A549 (cell line): ENCODE measurements at regions of chr7 and their contacts with region 1.

Region 1: GRCh38 chr7:80060218-80060806 is 74.3 kb upstream of the GNAI1 start:
- DNase-seq: peak; percentile 17 to 71
- ATAC-seq: 0 out of 6 replicates have a peak, but pooled peaks of 1 of the 2 experiments have one; percentile 34
- H3K4me3 ChIP-seq: no peak overlapping the region
- H3K27ac ChIP-seq: no peak overlapping the region
- H3K4me1 ChIP-seq: no peaks in the 10 kb centered on the region
- CTCF ChIP-seq: peak; percentile 62
- EP300 ChIP-seq: no peak
- POLR2A ChIP-seq: no peak
- RAD21 ChIP-seq: peak; percentile 74 to 80

Region 2: GRCh38 chr7:80288175-80289122 is 228.1 kb after region 1 on chr7:
- CTCF ChIA-PET with region 1: interaction called, 10 read pairs
- POLR2A ChIA-PET with region 1: no interaction called
- DNase-seq: peak in 1 of 2 experiments; percentile 44
- ATAC-seq: peak; percentile 90 to 97
- H3K4me3 ChIP-seq: no peak overlapping the region
- H3K27ac ChIP-seq: peak overlapping the region; percentile 37 to 75; a peak in 4 of 6 replicates
- H3K4me1 ChIP-seq: peaks cover 18% of the 10 kb centered on the region
- CTCF ChIP-seq: peak; percentile 48
- EP300 ChIP-seq: peak in 1 of 2 experiments; percentile 49; a peak in 1 of 5 replicates
- POLR2A ChIP-seq: no peak
- RAD21 ChIP-seq: peak; percentile 71 to 75